ENCODE measurements at regions of chr4 and their contacts with region 1.

Region 1: DNA sequence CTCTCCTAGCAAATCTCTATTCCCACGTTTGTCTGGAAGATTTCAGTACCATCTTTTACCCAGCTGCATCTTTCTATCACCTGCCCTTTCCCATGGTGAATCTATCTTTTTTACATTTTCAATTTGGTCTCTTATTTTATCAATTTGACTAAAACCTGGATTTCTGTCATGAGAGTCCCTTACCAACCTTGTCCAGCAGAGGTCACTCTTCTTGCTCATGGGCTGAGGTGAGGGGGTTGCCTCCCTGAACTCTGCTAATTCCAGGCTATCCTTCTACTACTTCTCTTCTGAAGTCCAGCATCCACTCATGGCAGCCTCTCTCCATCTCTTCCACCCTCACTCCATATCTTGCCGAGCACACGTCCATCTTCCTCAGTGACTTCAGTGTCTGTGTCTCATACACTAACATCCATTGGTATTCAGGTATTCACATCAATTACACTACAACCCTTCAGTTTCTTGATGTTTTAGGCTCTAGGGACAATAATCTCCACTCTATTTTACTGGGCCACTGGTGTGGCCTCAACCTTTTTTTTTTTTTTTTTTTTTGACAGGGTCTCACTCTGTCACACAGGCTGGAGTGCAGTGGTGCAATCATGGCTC is 17.8 kb upstream of the ZNF827 start:
- DNase-seq: peak; percentile 20
- ATAC-seq: no peak
- H3K4me3 ChIP-seq: no peak overlapping the region
- H3K27ac ChIP-seq: no peak overlapping the region
- H3K4me1 ChIP-seq: peaks cover 5% of the 10 kb centered on the region
- H3K27me3 ChIP-seq: no peaks in the 10 kb centered on the region
- CTCF ChIP-seq: peak; percentile 73

Region 2: GRCh38 chr4:145799223-145799622 is 157.2 kb before region 1 on chr4:
- CTCF ChIA-PET with region 1: no interaction called
- POLR2A ChIA-PET with region 1: no interaction called
- in situ Hi-C with region 1: no loop called
- intact Hi-C with region 1: no loop called
- DNase-seq: no peak
- ATAC-seq: no peak
- H3K4me3 ChIP-seq: no peak overlapping the region
- H3K27ac ChIP-seq: no peak overlapping the region
- H3K4me1 ChIP-seq: no peaks in the 10 kb centered on the region; the same call in 1 of the 2 replicates
- H3K27me3 ChIP-seq: no peaks in the 10 kb centered on the region
- CTCF ChIP-seq: no peak

Region 3: DNA sequence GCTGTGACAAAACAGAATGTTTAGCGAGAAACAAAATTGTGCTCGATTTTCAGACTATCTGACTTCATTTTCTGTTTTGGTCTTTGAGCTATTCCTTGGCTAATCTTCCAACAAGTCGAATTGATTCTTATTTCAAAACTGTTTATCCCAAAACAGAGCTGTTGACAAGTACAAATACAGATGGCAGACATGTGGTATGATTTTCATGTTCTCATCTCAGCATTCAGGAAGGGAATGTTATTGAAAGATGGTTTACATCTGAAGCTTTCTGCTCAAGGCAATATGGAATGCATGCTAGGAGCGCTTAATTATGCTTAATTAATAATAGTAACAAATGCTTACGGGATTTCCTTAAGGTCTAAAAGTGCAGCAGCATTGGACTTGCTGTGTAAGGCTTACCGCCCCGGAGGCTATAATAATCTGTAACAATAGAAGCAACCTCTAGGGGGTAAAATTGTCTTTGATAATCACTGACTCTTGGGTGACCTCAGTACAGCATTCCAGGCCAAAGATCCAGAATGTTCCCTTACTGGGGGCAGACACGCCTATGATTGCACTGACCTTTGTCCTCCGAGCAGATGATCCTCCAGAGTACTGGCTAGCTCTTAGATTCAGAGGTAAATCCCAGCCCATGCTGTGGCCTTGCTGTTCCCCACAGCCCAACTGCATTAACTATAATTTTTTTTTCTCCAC is 235.5 kb after region 1 on chr4:
- CTCF ChIA-PET with region 1: no interaction called
- POLR2A ChIA-PET with region 1: no interaction called
- in situ Hi-C with region 1: no loop called
- intact Hi-C with region 1: loop called (anchors 10 kb)
- DNase-seq: no peak
- ATAC-seq: no peak
- H3K4me3 ChIP-seq: no peak overlapping the region
- H3K27ac ChIP-seq: no peak overlapping the region
- H3K4me1 ChIP-seq: no peaks in the 10 kb centered on the region
- H3K27me3 ChIP-seq: no peaks in the 10 kb centered on the region
- CTCF ChIP-seq: no peak

Measured in Panc1 (cell line).